Activated B cell treated with CpG ODN at 0.5 μM for 24 hours (primary cell): ENCODE measurements at regions of chr1 and their contacts with region 1.

Region 1: DNA sequence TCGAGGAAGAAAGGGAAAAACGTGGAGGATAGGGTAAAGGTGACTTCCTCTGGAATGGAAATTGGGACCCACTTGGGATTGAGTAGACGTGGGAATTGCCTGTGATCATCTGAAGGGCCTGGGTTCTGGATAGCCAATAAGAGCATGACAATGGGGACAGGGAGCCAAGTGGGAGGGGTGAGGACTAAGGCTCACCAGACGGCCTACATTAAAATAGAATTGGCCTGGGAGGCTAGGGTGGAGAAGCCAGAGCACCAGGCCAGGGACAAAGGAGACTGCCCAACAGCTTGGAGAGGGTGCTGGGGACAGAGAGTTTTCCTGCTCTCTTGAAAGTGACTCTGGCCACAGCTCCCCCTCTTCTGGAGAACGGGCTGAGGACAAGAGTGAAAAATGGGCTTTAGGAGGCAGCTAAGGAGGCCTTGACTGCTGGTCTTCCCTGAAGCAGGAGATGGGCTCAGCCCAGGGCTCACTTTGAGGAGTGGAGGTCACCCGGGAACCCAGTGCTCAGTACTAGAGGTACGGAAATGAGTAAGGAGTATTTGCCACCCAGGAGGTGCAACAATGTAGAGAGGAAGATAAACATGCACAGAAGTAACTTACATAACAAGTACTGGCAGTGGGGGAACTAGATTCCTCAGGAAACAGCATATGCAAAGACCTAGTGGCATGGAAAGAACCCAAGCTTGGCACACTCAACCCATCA is 18.8 kb downstream of the INKA2 start:
- DNase-seq: no peak
- ATAC-seq: no peak
- H3K4me3 Mint-ChIP-seq: no peak overlapping the region
- H3K27ac Mint-ChIP-seq: no peak overlapping the region
- H3K4me1 Mint-ChIP-seq: peaks cover 21% of the 10 kb centered on the region
- H3K27me3 Mint-ChIP-seq: no peaks in the 10 kb centered on the region
- CTCF ChIP-seq: no peak

Region 2: GRCh38 chr1:111739194-111739924 is 18.9 kb after region 1 on chr1 and contains the start of gene INKA2:
- CTCF ChIA-PET with region 1: interaction called, 60 read pairs
- POLR2A ChIA-PET with region 1: interaction called, 4 read pairs
- intact Hi-C with region 1: loop called (anchors 1 kb)
- DNase-seq: peak; percentile 74
- ATAC-seq: peak; percentile 77
- H3K4me3 Mint-ChIP-seq: peak within 1 kb of the TSS; percentile 92
- H3K27ac Mint-ChIP-seq: peak within 1 kb of the TSS; percentile 84
- H3K4me1 Mint-ChIP-seq: peaks cover 18% of the 10 kb centered on the region
- H3K27me3 Mint-ChIP-seq: peaks cover 2% of the 10 kb centered on the region
- CTCF ChIP-seq: no peak
- total RNA-seq, gene INKA2: 1.3 and 2.1 TPM in 2 replicates

Region 3: GRCh38 chr1:111747282-111747734 is 26.9 kb after region 1 on chr1:
- CTCF ChIA-PET with region 1: interaction called, 60 read pairs
- POLR2A ChIA-PET with region 1: interaction called, 3 read pairs
- intact Hi-C with region 1: loop called (anchors 1 kb)
- DNase-seq: no peak
- ATAC-seq: peak; percentile 77
- H3K4me3 Mint-ChIP-seq: no peak overlapping the region
- H3K27ac Mint-ChIP-seq: no peak overlapping the region
- H3K4me1 Mint-ChIP-seq: no peaks in the 10 kb centered on the region
- H3K27me3 Mint-ChIP-seq: no peaks in the 10 kb centered on the region
- CTCF ChIP-seq: no peak

Region 4: GRCh38 chr1:111769517-111770146 is 49.2 kb after region 1 on chr1:
- CTCF ChIA-PET with region 1: interaction called, 86 read pairs
- POLR2A ChIA-PET with region 1: no interaction called
- intact Hi-C with region 1: loop called (anchors 1 kb)
- DNase-seq: no peak
- ATAC-seq: peak; percentile 58
- H3K4me3 Mint-ChIP-seq: no peak overlapping the region
- H3K27ac Mint-ChIP-seq: no peak overlapping the region
- H3K4me1 Mint-ChIP-seq: no peaks in the 10 kb centered on the region
- H3K27me3 Mint-ChIP-seq: no peaks in the 10 kb centered on the region
- CTCF ChIP-seq: no peak

Region 5: DNA sequence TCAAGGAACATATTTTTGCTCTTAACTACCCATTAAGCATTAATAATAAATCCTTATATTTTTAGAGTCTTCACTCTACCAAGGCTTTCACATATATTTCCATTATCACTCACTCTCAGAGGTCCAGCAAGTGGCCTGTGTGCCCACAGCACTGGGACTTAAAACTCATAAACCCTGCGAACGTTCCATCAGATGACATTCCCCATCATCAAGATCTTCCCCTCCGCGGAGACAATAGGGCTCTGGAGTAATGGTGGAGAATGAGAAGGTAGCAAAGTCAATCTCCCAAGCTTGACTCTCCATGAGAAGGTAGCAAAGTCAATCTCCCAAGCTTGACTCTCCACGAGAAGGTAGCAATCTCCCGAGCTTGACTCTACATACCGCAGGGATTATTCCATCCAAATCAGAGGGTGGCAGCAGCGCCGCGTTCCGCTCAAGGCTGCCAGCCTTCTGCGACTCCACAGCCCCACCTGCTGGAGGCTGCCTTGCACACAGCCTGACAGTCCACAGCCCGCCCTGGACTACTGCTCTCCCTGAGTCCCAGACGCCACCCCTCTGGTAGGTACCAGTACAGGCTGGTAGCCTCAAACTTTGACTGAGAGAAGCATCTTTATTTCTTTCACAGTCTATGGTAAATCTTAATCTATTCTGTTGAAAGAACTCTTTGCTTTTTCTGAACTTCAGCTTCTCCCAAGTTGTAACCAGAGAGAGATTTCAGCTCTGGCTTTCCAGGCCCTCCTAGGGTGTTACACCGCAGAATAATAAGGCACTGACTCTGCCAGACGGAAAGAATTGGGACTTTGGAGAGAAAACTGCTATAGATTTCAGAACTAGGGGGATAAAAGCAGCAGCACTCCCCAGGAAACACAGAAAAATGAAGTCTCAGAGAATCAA is 649.2 kb after region 1 on chr1:
- CTCF ChIA-PET with region 1: no interaction called
- POLR2A ChIA-PET with region 1: no interaction called
- intact Hi-C with region 1: loop called (anchors 1 kb)
- DNase-seq: peak; percentile 72
- ATAC-seq: peak; percentile 100
- H3K4me3 Mint-ChIP-seq: no peak overlapping the region
- H3K27ac Mint-ChIP-seq: no peak overlapping the region
- H3K4me1 Mint-ChIP-seq: peaks cover 4% of the 10 kb centered on the region
- H3K27me3 Mint-ChIP-seq: peaks cover 37% of the 10 kb centered on the region
- CTCF ChIP-seq: peak; percentile 87